HAP-1 (cell line): ENCODE measurements at regions of chr18 and their contacts with region 1.

Region 1: DNA sequence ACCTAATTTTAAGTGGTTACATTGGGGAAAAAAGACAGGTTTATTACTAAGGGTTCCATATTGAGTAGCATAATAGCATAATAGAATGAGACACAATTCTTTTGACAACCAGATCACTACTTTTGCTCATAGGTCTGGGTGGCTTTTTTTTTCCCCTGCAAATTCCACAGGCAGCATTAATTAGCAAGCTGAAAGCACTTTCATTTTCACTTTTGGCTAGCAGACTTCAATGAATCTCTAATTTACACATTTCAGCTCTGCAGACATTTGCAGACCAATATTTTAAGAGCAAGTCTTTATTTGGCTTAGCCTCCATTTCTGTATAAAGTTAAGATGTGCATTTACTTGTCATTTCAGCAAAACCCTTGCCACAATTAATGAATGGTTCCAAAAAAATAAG is 185.5 kb downstream of the NOL4 start:
- DNase-seq: no peak
- H3K4me3 ChIP-seq: no peak overlapping the region
- H3K4me1 ChIP-seq: no peaks in the 10 kb centered on the region
- H3K27me3 ChIP-seq: no peaks in the 10 kb centered on the region

Region 2: GRCh38 chr18:33839441-33840211 is 199.6 kb before region 1 on chr18:
- in situ Hi-C with region 1: loop called (anchors 25 kb)
- DNase-seq: peak; percentile 38 to 44
- H3K4me3 ChIP-seq: no peak overlapping the region
- H3K4me1 ChIP-seq: no peaks in the 10 kb centered on the region
- H3K27me3 ChIP-seq: no peaks in the 10 kb centered on the region